Heart left ventricle (tissue), 16 donors: ENCODE measurements at regions of chr5 and their contacts with region 1.

Region 1: GRCh38 chr5:8756498-8757084 is 789.3 kb downstream of the SEMA5A start:
- DNase-seq: no peak
- ATAC-seq: peak in 2 of 4 donors; percentile 58
- H3K4me3 ChIP-seq: no peak overlapping the region
- H3K27ac ChIP-seq: no peak overlapping the region
- H3K4me1 ChIP-seq: peaks cover 0 to 6% (median 0%) of the 10 kb centered on the region in 12 donors
- H3K27me3 ChIP-seq: no peaks in the 10 kb centered on the region
- CTCF ChIP-seq: peak; percentile 23 to 53 (median 35)
- POLR2A ChIP-seq: no peak

Region 2: DNA sequence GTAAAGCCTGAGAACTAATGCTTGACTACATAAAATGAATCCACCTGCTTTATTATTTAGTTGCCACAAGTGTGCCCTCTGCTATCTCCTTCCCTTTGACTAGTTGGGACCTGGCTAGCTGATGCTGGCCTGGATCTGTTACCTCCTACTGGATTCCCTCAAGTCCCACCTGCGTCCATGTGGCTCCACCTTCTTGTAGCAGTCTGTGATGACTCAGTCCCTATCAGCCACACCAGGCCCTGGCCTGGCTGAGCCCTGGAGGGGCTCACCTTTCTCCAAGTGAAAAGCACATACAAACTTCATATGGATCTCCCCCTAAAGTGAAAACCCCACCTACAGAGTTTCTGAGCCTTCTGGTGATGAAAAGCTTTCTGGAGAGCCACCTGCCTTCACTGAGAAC is 177.9 kb after region 1 on chr5:
- intact Hi-C with region 1: no loop called
- DNase-seq: no peak
- ATAC-seq: no peak
- H3K4me3 ChIP-seq: no peak overlapping the region
- H3K27ac ChIP-seq: no peak overlapping the region
- H3K4me1 ChIP-seq: no peaks in the 10 kb centered on the region
- H3K27me3 ChIP-seq: no peaks in the 10 kb centered on the region
- CTCF ChIP-seq: no peak
- POLR2A ChIP-seq: no peak

Region 3: DNA sequence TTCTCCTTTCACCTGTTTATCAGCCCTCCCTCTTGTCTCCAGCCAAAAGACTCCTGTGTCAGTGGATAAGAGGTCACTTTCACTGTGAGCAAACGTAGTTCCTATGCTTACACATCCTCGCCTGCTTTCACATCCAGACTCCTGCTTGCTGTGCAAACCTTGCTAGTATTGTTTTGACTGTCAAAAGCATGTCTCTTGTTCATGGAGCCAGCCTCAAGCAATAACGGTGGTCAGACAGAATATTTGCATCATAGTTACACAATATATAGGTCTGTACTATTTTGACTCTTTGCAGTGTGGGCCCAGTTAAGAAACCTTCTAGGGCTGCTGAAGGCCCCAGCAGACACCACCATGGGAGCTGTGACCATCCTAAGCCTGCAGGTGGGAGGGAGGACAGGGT is 369.3 kb after region 1 on chr5:
- intact Hi-C with region 1: no loop called
- DNase-seq: no peak
- ATAC-seq: no peak
- H3K4me3 ChIP-seq: no peak overlapping the region
- H3K27ac ChIP-seq: no peak overlapping the region
- H3K4me1 ChIP-seq: no peaks in the 10 kb centered on the region
- H3K27me3 ChIP-seq: no peaks in the 10 kb centered on the region
- CTCF ChIP-seq: no peak
- POLR2A ChIP-seq: no peak

Region 4: DNA sequence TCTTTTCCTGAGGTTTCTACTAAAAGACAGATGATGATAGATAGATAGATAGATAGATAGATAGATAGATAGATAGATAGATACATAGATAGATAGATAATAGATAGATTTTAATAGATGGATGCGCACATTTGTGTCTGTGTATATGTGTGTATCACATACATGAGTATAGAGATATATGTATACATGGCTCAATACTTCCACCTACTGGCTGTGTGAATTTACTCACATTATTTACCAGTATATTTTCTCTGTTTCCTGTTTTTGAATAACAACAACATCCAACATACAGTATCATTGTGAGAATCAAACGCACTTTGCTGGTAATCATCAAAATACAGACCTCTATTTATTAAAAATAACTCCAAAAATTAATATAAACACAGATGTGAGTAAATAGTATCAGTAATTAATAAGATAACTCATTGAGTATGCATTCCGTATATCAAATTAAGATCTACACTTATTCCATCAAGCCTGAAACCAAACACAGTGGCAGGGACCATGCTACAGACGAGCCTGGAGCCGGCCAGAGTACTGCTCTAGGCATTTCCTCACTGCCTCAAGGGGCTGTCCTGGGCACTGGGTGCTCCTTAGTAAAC is 451.3 kb after region 1 on chr5:
- intact Hi-C with region 1: loop called in 2 of 10 experiments (anchors 10 kb)
- DNase-seq: no peak
- ATAC-seq: no peak
- H3K4me3 ChIP-seq: no peak overlapping the region
- H3K27ac ChIP-seq: no peak overlapping the region
- H3K4me1 ChIP-seq: no peaks in the 10 kb centered on the region
- H3K27me3 ChIP-seq: no peaks in the 10 kb centered on the region
- CTCF ChIP-seq: peak in 11 of 12 donors; percentile 19 to 58 (median 41)
- POLR2A ChIP-seq: no peak

Region 5: DNA sequence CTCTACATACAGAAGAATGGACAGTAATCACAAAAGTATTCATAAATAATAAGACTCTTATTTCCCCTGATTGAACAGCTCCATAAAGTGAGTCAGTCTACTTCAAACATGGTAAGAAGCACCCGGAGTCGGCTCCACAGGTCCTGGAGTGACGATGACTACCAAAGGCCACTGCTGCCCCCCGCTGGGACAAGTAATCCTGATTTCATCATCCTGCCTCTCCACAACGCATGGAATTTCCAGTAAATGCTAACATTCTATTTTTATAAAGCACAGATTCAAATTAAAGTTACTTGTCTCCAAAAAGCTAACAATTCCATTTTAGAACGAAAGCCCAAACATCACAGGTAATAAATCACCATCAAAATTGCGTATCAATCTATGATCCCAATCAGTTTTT is 1476.9 kb after region 1 on chr5:
- intact Hi-C with region 1: loop called in 1 of 10 experiments (anchors 10 kb)
- DNase-seq: no peak
- ATAC-seq: peak in 1 of 4 donors; percentile 40
- H3K4me3 ChIP-seq: no peak overlapping the region
- H3K27ac ChIP-seq: no peak overlapping the region
- H3K4me1 ChIP-seq: no peaks in the 10 kb centered on the region
- H3K27me3 ChIP-seq: no peaks in the 10 kb centered on the region
- CTCF ChIP-seq: peak in 6 of 12 donors; percentile 13 to 34 (median 30)
- POLR2A ChIP-seq: no peak